B cell (primary cell): ENCODE measurements at regions of chr4 and their contacts with region 1.

Region 1: DNA sequence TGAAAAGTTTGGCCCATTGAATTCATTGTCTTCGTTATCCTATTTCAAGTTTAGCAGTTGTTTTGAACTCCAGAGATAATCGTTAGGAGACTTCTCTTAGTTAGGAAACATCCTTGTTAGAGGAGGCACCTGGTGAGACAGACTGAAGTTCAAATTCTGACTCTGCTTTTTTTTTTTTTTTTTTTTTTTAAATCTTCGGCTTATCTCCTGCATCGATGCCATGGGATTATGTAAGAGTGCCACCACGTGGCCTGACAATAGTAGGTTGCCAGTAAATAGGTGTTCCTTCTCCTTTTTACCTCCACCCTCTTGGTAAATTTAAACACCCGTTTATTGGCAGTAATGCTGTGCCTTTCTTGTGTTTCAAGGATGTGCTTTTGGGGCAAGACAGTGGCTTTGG is 149.3 kb downstream of the SOWAHB start:
- DNase-seq: peak; percentile 44
- ATAC-seq: no peak
- H3K4me3 ChIP-seq: no peak overlapping the region
- H3K4me3 Mint-ChIP-seq: no peak overlapping the region
- H3K27ac ChIP-seq: no peak overlapping the region
- H3K27ac Mint-ChIP-seq: no peak overlapping the region
- H3K4me1 ChIP-seq: no peaks in the 10 kb centered on the region
- H3K4me1 Mint-ChIP-seq: no peaks in the 10 kb centered on the region
- H3K27me3 ChIP-seq: peaks cover 0 to 5% (median 0%) of the 10 kb centered on the region in 4 experiments
- H3K27me3 Mint-ChIP-seq: peaks cover 12% of the 10 kb centered on the region
- CTCF ChIP-seq: no peak

Region 2: DNA sequence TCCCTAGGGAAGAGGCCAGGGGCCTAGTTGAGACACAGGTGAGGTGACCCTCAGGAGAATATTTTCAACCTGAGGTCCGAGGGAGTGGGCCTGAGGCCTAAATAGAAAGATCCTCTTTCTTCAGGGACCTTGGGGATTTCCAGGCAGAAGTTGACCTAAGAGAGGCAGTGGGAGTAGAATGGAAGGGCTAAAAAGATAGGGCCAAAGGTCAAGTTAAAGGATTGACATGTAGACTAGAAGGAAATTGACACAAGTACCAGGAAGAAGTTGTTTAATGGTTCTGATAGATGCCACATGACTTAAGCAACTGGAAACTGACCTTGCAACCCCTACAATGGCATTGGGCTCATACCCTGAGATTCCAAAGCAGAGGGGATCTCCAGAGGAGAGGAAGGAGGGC is 236.7 kb before region 1 on chr4:
- CTCF ChIA-PET with region 1: no interaction called
- POLR2A ChIA-PET with region 1: no interaction called
- intact Hi-C with region 1: loop called (anchors 5 kb)
- DNase-seq: no peak
- ATAC-seq: no peak
- H3K4me3 ChIP-seq: no peak overlapping the region
- H3K4me3 Mint-ChIP-seq: no peak overlapping the region
- H3K27ac ChIP-seq: no peak overlapping the region
- H3K27ac Mint-ChIP-seq: no peak overlapping the region
- H3K4me1 ChIP-seq: no peaks in the 10 kb centered on the region
- H3K4me1 Mint-ChIP-seq: no peaks in the 10 kb centered on the region
- H3K27me3 ChIP-seq: no peaks in the 10 kb centered on the region
- H3K27me3 Mint-ChIP-seq: no peaks in the 10 kb centered on the region
- CTCF ChIP-seq: no peak